ENCODE measurements at regions of chr7 and their contacts with region 1.

Region 1: GRCh38 chr7:30814700-30815387 is 43.6 kb downstream of the MINDY4 start:
- DNase-seq: no peak

Region 2: DNA sequence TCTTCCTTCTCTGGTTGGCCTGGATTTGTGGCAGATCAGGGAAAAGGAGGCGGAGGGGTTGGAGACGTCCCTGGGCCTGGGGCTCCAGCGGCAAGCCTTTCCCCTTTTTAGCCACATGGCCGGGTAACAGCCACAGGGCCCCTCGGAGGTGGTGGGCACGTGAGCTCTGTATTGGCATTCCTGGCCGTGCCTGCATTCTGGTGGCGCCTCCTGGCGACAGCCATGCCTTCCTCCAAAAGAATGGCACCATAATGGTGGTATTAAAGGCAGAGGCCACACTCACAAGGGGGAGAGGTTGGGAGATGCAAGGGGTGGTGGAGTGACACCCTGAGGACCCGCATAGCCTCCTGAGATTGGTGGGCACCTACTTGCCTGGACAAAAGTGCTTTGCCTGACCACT is 93.8 kb after region 1 on chr7:
- intact Hi-C with region 1: loop called in 1 of 2 experiments (anchors 5 kb)
- DNase-seq: no peak